ENCODE measurements at regions of chr15 and their contacts with region 1.

Region 1: GRCh38 chr15:73873889-73874511 is 636 bp downstream of the TBC1D21 start:
- DNase-seq: peak; percentile 89
- ATAC-seq: peak; percentile 51; the same call in 1 of the 2 replicates
- H3K4me3 ChIP-seq: no peak overlapping the region
- H3K27ac ChIP-seq: no peak overlapping the region
- H3K4me1 ChIP-seq: no peaks in the 10 kb centered on the region
- H3K27me3 ChIP-seq: peaks cover 12% of the 10 kb centered on the region; the same call in 1 of the 2 replicates
- CTCF ChIP-seq: peak; percentile 85

Region 2: DNA sequence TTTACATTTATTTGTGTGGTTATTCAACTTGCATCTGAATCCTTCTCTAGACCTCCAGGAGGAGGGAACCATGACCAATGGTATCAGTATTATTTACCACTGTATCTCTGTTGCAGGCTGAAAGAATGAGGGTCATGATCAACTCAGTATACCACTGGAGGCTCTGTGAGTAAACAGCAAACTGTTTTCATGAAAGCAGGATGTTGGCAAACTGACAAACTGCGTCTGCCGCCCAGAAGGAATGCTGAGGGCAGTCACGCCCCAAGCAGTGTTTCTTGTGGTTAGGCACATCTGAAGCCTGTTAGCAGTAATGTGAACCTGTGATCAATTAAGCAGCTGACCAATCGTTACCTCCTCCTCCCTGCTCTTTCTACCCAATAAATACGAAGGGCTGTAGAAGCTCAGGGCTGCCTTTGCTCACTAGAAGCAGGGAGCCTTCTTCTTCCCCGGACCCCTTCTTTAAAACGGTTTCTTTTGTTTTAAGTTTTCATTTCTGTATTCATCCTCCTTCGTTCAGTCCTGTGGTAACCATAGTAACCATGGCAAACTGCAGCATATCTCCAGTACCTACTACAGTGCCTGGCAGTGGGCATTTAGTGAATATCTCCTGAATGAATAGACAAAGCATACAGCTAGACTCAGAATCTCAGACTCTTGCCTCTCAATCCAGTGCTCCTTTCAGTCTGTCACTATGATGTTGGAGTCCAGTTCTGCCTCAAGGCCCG is 234.4 kb before region 1 on chr15:
- CTCF ChIA-PET with region 1: no interaction called
- POLR2A ChIA-PET with region 1: no interaction called
- intact Hi-C with region 1: no loop called
- DNase-seq: no peak
- ATAC-seq: no peak
- H3K4me3 ChIP-seq: no peak overlapping the region
- H3K27ac ChIP-seq: no peak overlapping the region
- H3K4me1 ChIP-seq: peaks cover 12% of the 10 kb centered on the region
- H3K27me3 ChIP-seq: no peaks in the 10 kb centered on the region
- CTCF ChIP-seq: no peak

Region 3: DNA sequence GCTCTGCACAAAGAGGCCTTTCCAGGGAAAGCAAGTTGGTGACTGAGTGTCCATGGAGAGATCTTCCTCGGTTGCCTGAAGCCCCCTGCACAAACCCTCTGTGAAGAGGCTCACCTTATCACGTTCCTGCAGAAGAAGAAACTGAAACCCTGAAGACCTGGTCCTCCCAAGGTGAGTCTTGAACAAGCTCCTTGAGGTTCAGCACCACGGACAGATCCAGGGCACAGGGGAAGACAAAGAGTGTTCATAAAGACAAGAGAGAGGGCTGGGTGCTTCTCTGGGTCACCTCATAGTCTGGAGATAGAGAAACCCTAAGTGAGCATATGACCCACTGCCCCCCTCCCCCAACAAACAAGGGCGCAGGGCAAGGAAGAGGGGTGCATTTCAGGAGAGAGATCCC is 22.3 kb before region 1 on chr15:
- CTCF ChIA-PET with region 1: no interaction called
- POLR2A ChIA-PET with region 1: no interaction called
- intact Hi-C with region 1: no loop called
- DNase-seq: peak; percentile 68
- ATAC-seq: no peak; the same call in 1 of the 2 replicates
- H3K4me3 ChIP-seq: no peak overlapping the region
- H3K27ac ChIP-seq: no peak overlapping the region
- H3K4me1 ChIP-seq: no peaks in the 10 kb centered on the region
- H3K27me3 ChIP-seq: peaks cover 43% of the 10 kb centered on the region
- CTCF ChIP-seq: no peak

Region 4: DNA sequence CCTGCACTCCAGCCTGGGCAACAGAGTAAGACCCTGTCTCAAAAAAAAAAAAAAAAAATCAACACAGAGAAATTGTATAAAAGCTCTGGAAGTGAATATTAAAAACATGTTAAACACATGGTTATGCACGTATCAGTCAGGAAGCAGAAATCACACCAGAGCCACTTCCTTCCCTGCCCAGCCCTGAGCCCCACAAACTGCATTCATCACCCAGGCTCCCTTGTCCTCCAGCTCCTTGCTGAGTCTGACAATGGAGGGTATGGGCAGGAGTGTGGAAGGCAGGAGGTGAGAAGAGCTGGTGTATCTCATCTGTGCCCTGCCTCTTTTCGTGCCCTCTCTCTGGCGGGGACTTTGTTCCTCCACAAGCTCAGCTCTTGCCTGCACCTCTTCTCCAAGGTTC is 40.1 kb after region 1 on chr15:
- CTCF ChIA-PET with region 1: interaction called, 4 read pairs
- POLR2A ChIA-PET with region 1: no interaction called
- intact Hi-C with region 1: loop called (anchors 2 kb)
- DNase-seq: no peak
- ATAC-seq: no peak
- H3K4me3 ChIP-seq: no peak overlapping the region
- H3K27ac ChIP-seq: peak overlapping the region; percentile 54
- H3K4me1 ChIP-seq: peaks cover 51% of the 10 kb centered on the region
- H3K27me3 ChIP-seq: no peaks in the 10 kb centered on the region
- CTCF ChIP-seq: no peak

Region 5: DNA sequence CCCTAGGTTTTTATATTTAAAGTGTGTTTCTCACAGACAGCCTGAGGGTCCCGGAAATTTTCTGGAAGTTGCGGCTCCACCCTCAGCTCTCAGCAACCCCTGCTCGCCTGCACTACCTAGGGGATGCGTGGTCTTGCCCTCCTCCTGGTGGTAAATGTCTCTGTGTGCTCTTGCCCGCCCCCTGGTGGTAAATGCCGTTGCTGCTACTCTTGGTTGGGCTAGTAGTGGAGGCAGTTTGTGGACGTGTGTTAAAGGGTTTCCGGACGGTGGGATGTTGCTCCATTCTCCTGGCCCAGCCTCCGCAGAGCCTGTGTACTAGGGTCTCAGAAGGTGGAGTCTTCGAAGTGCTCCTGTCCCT is 90.7 kb after region 1 on chr15:
- CTCF ChIA-PET with region 1: no interaction called
- POLR2A ChIA-PET with region 1: no interaction called
- intact Hi-C with region 1: loop called (anchors 2 kb)
- DNase-seq: peak; percentile 79
- ATAC-seq: peak; percentile 40
- H3K4me3 ChIP-seq: no peak overlapping the region
- H3K27ac ChIP-seq: 0 out of 2 replicates have a peak overlapping the region, but pooled peaks have one; percentile 53
- H3K4me1 ChIP-seq: peaks cover 46% of the 10 kb centered on the region
- H3K27me3 ChIP-seq: no peaks in the 10 kb centered on the region
- CTCF ChIP-seq: peak; percentile 92

Measured in PC-3 (cell line).